HAP-1 (cell line): ENCODE measurements at regions of chr4 and their contacts with region 1.

Region 1: GRCh38 chr4:153083447-153083947 is 120.7 kb upstream of the TRIM2 start:
- DNase-seq: peak; percentile 82 to 90
- H3K4me3 ChIP-seq: no peak overlapping the region
- H3K4me1 ChIP-seq: peaks cover 9% of the 10 kb centered on the region
- H3K27me3 ChIP-seq: peaks cover 22% of the 10 kb centered on the region

Region 2: DNA sequence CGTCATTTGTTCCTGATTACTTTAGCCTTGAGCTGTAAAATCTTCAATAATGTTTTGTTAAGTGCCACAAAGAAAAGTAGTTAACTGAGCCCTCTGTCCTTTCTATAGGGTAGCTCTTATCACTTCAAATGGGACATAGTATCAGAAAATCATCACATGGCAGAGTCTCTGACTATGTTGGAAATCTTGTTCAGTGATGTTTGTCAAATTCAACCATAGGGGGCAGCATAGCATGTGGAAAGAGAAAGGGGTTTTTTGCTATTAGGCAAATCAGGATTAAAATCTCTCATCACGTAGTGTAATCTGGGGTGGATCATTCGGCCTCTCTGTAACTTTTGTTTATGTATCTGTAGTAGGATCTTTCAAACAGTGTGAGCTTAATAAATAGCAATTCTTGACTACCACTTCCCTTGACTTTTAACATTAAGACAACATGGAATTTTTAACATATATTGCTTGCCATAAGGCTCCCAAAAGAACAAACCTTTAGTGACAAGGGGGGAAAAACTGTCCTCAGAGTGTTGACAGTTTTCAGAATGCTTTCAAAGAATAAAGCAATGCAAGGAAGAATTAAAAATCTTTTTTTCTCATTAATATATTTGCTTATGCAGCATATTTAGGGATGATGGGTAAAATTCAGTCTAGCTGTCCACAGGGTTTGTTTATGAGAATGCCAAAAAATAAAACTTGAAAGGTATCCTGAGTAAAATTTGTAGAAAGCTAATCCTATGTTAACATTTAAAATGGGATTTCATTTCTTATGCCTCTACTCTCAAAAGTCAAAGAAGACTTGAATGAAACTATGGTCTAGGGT is 674.8 kb before region 1 on chr4:
- in situ Hi-C with region 1: loop called (anchors 25 kb)
- DNase-seq: peak; percentile 49 to 62
- H3K4me3 ChIP-seq: no peak overlapping the region
- H3K4me1 ChIP-seq: no peaks in the 10 kb centered on the region
- H3K27me3 ChIP-seq: no peaks in the 10 kb centered on the region

Region 3: GRCh38 chr4:153127760-153128494 is 44.4 kb after region 1 on chr4:
- in situ Hi-C with region 1: loop called (anchors 5 kb)
- DNase-seq: peak; percentile 96
- H3K4me3 ChIP-seq: peak overlapping the region; percentile 15
- H3K4me1 ChIP-seq: peaks cover 7% of the 10 kb centered on the region
- H3K27me3 ChIP-seq: no peaks in the 10 kb centered on the region